ENCODE measurements at regions of chr14 and their contacts with region 1.

Region 1: GRCh38 chr14:75147423-75148071 is 20.7 kb upstream of the NEK9 start:
- DNase-seq: peak; percentile 53 to 74
- ATAC-seq: peak; percentile 79 to 94 (median 92)
- H3K4me3 ChIP-seq: peak overlapping the region in 1 of 10 donors; percentile 3
- H3K27ac ChIP-seq: peak overlapping the region; percentile 73 to 92 (median 84)
- H3K4me1 ChIP-seq: peaks cover 9 to 72% (median 49%) of the 10 kb centered on the region in 9 donors
- H3K27me3 ChIP-seq: no peaks in the 10 kb centered on the region
- CTCF ChIP-seq: peak; percentile 22 to 72 (median 51)

Region 2: DNA sequence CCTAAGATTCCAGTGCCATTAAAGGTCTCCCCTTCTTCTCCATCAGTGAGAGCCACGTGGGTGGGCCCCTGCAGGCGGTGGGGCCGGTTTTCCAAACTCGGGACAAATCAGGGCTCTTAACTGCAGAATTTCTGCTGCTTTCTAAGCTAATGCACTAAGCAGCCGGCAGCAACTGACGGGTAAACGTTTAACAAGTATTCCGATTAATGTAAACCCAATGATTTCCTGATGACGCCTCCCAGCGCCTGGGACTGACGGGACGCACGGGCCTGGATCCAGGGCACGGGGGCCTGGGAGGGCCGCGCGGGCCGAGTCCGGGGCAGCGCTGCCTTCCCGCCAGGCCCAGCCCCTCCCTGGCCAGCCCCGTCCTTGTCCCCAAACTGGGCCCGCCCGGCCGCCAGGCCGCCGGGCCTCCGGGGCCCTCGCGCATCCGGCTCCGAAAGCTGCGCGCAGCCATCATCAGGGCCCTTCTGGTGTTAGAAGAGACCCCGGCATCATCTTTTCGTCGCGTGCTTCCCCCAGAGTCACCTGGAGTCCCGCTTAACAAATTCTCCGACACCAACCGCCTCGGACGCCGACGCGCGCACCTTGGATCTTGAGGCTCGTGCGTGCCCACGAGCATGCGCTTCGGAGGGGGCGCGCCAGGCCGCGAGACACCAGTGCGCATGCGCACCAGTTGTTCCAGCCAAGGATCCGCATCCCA is 96.5 kb before region 1 on chr14 and contains the start of gene MLH3:
- intact Hi-C with region 1: no loop called
- DNase-seq: peak; percentile 81 to 89
- ATAC-seq: peak; percentile 89 to 97 (median 95)
- H3K4me3 ChIP-seq: peak within 1 kb of the TSS; percentile 47 to 74 (median 66)
- H3K27ac ChIP-seq: peak within 1 kb of the TSS; percentile 80 to 93 (median 90)
- H3K4me1 ChIP-seq: peaks cover 0 to 36% (median 21%) of the 10 kb centered on the region in 9 donors
- H3K27me3 ChIP-seq: no peaks in the 10 kb centered on the region
- CTCF ChIP-seq: peak in 3 of 9 donors; percentile 13 to 21 (median 14)
- total RNA-seq, gene MLH3: 14.7 to 21.6 (median 18.7) TPM

Region 3: GRCh38 chr14:75213172-75213571 is 65.6 kb after region 1 on chr14:
- intact Hi-C with region 1: no loop called
- DNase-seq: no peak
- ATAC-seq: no peak
- H3K4me3 ChIP-seq: no peak overlapping the region
- H3K27ac ChIP-seq: no peak overlapping the region
- H3K4me1 ChIP-seq: peaks cover 0 to 8% (median 0%) of the 10 kb centered on the region in 9 donors
- H3K27me3 ChIP-seq: peaks cover 0 to 4% (median 0%) of the 10 kb centered on the region in 7 donors
- CTCF ChIP-seq: no peak

Region 4: GRCh38 chr14:75230140-75231045 is 82.8 kb after region 1 on chr14:
- intact Hi-C with region 1: loop called in 1 of 10 experiments (anchors 10 kb)
- DNase-seq: peak in 1 of 2 donors; percentile 83
- ATAC-seq: peak in 5 of 8 donors; percentile 46 to 80 (median 60)
- H3K4me3 ChIP-seq: no peak overlapping the region
- H3K27ac ChIP-seq: peak overlapping the region in 6 of 10 donors; percentile 21 to 60 (median 43)
- H3K4me1 ChIP-seq: peaks cover 0 to 53% (median 9%) of the 10 kb centered on the region in 9 donors
- H3K27me3 ChIP-seq: no peaks in the 10 kb centered on the region
- CTCF ChIP-seq: peak in 4 of 9 donors; percentile 14 to 22 (median 20)

Measured in heart right ventricle (tissue), 16 donors.